ENCODE measurements at regions of chr12 and their contacts with region 1.

Region 1: DNA sequence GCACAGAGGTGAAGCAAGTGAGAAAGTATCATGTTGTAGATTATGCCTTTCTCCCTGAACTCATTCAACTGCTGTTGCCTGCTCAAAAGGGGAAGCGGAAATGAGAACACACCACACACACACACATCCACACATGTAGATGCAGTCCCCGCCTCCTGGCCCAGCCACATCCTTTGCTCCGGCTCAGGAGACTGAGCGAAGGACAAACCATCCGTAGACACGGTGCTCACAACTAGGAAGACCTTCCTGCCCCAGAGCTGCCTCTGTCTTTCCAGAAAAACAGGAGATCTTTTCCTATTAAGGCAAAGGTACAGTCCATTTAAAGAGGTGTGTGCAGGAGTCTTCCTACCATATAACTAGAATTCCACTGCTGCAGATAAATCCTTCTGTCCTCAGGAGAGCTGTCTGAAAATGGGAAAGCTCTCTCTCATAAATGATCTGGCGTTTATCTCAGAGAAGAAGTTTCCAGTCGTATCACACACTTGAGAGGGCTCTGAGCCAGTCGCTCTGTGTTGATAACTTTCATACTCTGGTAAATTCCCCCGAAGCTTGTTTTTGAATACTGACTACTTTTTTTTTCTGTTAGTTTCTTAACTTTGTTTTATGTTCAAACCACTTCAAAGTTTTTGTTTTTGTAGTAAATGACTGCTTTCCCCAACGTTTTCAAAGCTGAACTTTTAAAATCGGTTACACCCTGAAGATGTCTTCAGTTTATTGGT is at the start of gene TESPA1:
- DNase-seq: peak in 1 of 10 donors; percentile 28
- H3K4me3 ChIP-seq: no peak within 1 kb of the TSS
- H3K27ac ChIP-seq: no peak within 1 kb of the TSS
- H3K27me3 ChIP-seq: no peaks in the 10 kb centered on the region
- CTCF ChIP-seq: no peak
- total RNA-seq, gene TESPA1: 34.4 to 265 (median 138) TPM

Region 2: GRCh38 chr12:54879150-54879549 is 105.7 kb before region 1 on chr12:
- intact Hi-C with region 1: no loop called
- DNase-seq: no peak
- H3K4me3 ChIP-seq: no peak overlapping the region
- H3K27ac ChIP-seq: no peak overlapping the region
- H3K27me3 ChIP-seq: no peaks in the 10 kb centered on the region
- CTCF ChIP-seq: no peak

Region 3: GRCh38 chr12:54941659-54942058 is 43.2 kb before region 1 on chr12:
- intact Hi-C with region 1: loop called in 1 of 2 experiments (anchors 5 kb)
- DNase-seq: peak in 5 of 10 donors; percentile 30 to 60 (median 42)
- H3K4me3 ChIP-seq: peak overlapping the region in 1 of 59 donors; percentile 10
- H3K27ac ChIP-seq: peak overlapping the region in 56 of 59 donors; percentile 6 to 87 (median 66)
- H3K27me3 ChIP-seq: no peaks in the 10 kb centered on the region
- CTCF ChIP-seq: peak in 1 of 56 donors; percentile 12

Region 4: DNA sequence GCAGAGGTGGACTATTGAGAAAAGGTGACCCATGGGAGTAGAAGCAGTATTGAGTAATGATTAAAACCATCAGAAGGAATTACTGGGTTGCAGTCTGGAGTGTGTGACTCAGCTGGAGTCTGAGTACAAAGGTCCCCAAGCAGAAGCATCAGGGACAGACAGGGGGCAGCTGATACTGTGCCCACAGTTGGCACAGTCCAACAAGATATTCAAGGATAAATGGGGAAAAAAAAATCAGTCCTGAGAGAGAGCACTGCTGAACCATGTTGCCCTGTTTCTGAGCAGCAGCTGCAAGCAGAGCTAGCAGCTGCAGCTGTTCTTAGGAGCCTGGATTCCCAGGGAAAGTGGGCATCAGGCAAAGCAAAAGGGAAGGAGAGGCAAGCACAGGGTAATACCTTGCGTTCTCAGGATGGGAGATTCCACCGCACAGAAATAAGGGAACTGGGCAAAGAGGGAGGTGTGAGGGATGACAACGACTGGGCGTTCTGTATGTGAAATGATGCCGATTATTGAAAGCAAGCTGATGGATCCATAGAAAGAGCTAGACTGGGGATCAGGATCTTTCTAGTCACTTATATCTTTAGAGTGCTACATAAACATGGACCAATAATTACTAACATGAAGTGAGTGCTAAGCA is 52.7 kb after region 1 on chr12:
- intact Hi-C with region 1: no loop called
- DNase-seq: no peak
- H3K4me3 ChIP-seq: no peak overlapping the region
- H3K27ac ChIP-seq: no peak overlapping the region
- H3K27me3 ChIP-seq: peaks cover 0 to 19% (median 0%) of the 10 kb centered on the region in 45 donors
- CTCF ChIP-seq: no peak

Region 5: GRCh38 chr12:55060470-55060869 is 75.7 kb after region 1 on chr12:
- intact Hi-C with region 1: no loop called
- DNase-seq: no peak
- H3K4me3 ChIP-seq: no peak overlapping the region
- H3K27ac ChIP-seq: no peak overlapping the region
- H3K27me3 ChIP-seq: peaks cover 0 to 8% (median 0%) of the 10 kb centered on the region in 45 donors
- CTCF ChIP-seq: no peak

Region 6: GRCh38 chr12:55220725-55221124 is 235.9 kb after region 1 on chr12 and contains the start of gene OR10A7:
- intact Hi-C with region 1: no loop called
- DNase-seq: no peak
- H3K4me3 ChIP-seq: no peak within 1 kb of the TSS
- H3K27ac ChIP-seq: no peak within 1 kb of the TSS
- H3K27me3 ChIP-seq: no peaks in the 10 kb centered on the region
- CTCF ChIP-seq: no peak
- total RNA-seq, gene OR10A7: not detected

Measured in dorsolateral prefrontal cortex (tissue), 120 donors.